ENCODE measurements at regions of chr17 and their contacts with region 1.

Region 1: DNA sequence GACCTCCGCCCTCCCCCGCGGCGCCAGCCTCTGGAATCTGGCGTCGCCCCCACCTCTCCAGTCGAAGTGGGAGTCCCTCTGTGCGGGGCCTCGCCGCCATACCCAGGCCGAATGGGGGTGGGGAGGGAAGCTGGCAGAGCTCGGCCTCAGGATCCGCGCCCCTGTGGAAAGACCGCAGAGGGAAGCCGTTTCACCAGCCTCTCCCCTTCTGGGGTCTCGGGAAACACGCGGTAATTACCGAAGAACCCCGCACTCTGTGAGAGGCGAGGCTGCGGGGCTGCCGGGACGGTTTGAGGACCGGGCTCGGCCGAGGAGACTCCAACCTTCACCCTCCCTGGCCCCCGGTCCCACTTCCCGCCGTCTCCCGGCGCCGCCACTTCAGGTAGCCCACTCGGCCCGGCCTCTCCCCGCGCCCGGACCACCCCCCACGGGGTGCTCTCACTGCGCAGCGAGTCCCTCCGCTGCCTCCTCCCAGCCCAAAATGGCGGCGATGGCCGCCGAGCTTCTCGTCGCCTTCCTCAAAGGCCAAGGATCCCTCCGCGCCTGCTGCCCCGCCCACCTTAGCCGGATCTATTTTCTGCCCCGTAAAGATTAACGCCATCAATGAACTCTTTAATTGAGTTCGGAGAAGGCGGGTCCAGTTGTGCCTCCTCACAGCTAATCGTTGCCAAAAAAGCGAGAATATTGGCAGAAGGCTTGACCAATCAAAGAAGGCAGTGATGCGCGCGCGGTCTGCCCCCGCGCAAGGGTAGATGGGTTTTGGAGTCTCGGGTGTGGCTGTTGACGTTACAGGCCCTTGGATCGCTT is 453 bp upstream of the HEXIM2 start:
- DNase-seq: peak; percentile 96
- ATAC-seq: peak; percentile 97
- H3K4me3 Mint-ChIP-seq: peak overlapping the region; percentile 99
- H3K27ac Mint-ChIP-seq: peak overlapping the region; percentile 99
- H3K4me1 Mint-ChIP-seq: peaks cover 36% of the 10 kb centered on the region
- H3K27me3 Mint-ChIP-seq: no peaks in the 10 kb centered on the region

Region 2: GRCh38 chr17:45123930-45124796 is 37.1 kb before region 1 on chr17:
- POLR2A ChIA-PET with region 1: no interaction called
- DNase-seq: no peak
- ATAC-seq: peak; percentile 9
- H3K4me3 Mint-ChIP-seq: no peak overlapping the region
- H3K27ac Mint-ChIP-seq: no peak overlapping the region
- H3K4me1 Mint-ChIP-seq: no peaks in the 10 kb centered on the region
- H3K27me3 Mint-ChIP-seq: peaks cover 9% of the 10 kb centered on the region

Region 3: DNA sequence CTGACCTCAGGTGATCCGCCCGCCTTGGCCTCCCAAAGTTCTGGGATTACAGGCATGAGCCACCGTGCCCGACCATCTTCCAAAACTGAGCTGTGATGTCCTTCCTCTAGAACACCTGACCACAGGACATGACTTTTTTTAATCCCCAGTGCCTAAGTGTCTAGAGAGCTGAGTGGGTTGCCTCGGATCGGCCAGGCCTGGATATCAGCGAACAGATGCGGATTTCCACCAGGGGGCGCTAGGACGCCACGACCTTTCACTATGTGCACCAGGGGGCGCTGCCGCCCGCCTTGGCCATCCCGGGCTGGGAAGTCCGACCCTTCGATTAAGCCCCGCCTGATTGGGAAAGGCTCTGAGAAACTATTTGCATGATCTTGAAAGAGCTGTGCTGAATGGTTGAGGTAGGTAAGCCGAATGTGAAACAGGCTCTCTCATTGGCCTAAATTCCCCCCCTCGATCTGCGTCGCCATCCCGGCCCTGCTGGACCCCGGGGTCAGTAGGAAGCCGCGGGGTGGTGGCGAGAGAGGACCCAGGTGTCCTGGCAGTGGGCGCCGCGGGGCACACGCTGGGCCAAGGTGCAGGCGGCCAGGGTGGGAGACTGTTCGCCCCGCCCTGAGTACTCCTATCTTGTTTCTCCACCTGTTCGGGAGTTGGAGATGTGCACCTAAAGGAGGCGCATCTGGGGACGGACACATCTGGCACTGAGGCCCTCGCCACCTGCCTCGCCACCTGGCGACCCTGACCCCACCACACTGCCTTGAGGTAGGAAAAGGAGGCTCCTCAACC is 25.8 kb before region 1 on chr17 and contains the start of gene ACBD4:
- POLR2A ChIA-PET with region 1: interaction called, 17 read pairs
- DNase-seq: peak; percentile 99
- ATAC-seq: peak; percentile 91
- H3K4me3 Mint-ChIP-seq: peak within 1 kb of the TSS; percentile 94
- H3K27ac Mint-ChIP-seq: peak within 1 kb of the TSS; percentile 80
- H3K4me1 Mint-ChIP-seq: peaks cover 8% of the 10 kb centered on the region
- H3K27me3 Mint-ChIP-seq: peaks cover 11% of the 10 kb centered on the region
- total RNA-seq, gene ACBD4: 24.5 to 25.0 TPM

Region 4: DNA sequence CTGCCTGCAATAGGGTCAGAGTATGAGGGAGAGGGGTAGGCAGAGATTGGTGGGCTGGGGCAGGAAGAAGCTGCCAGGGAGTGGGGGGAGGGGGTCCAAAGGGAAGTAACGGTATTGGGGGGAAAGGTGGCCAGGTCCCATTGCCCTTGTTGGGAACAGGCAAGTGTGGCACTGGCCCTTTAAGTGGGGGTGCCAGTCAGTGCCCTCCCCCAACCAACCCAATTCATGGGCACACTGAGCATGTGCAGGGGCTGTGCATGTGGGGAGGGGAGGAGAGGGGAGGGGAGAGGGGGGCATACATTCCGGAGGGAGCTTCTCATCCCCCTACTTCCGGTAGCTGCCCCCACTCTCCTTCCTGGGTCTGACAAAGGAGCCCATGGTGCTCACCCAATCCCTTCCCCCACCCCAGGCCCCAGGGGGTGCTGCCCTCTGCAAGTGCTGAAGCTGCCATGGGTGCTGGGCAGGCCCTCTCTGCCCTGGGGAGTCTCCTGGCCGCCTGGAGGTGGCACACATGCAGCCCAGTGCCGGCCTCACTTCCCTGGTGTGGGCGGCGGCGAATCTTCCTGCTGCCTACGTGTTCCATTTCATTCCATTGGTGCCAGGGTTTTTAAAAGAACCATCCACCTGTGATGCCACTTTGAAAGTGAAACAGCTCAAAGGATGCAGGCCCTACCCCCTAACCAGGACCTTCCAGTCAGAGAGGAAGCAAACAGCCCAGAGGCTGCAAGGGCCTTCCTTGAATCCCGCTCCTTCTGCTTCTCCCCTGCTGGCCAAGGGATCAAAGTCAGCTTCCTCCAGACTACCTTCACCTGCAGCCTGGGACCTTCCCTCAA is 11.4 kb after region 1 on chr17:
- POLR2A ChIA-PET with region 1: interaction called, 55 read pairs
- DNase-seq: peak; percentile 72
- ATAC-seq: peak; percentile 71
- H3K4me3 Mint-ChIP-seq: peak overlapping the region; percentile 86
- H3K27ac Mint-ChIP-seq: peak overlapping the region; percentile 96
- H3K4me1 Mint-ChIP-seq: peaks cover 7% of the 10 kb centered on the region
- H3K27me3 Mint-ChIP-seq: no peaks in the 10 kb centered on the region

Region 5: DNA sequence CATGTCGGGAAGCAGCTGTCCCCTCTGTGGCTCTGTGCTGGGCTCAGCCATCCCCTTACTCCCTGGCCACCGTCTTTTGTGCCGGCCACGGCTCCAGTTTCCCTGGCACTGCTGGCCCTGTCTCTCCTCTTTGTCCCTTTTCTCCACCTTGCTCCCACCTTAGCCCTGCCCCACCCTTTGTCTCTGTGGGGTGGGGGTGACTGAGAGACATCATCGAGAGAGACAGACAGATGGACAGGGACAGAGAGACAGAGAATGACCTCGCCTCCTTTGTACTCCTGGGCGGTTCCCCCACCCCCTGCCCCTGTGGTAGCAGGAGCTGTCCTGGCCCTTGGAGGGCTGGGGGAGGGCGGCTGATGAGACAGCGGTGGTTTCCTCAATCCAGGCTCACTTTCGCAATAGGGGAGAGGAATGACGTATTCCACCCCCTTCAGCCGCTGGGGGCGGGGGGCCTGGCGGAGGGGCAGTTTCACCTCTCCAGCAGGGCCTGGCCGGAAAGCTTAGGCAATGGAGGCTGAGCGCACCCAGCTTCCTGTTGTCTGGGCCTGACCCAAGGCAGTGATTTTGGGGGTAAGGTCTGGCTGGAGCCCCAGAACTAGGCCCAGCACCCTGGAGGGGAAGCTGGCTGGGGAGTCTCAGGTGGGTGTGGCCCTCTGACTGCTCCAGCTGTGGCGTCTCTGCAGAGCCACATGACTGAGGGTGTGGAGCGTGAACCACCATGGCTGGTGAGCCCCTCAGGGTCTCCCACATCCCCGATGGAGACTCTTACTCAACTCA is 67.7 kb after region 1 on chr17:
- POLR2A ChIA-PET with region 1: interaction called, 11 read pairs
- DNase-seq: peak; percentile 76
- ATAC-seq: peak; percentile 33
- H3K4me3 Mint-ChIP-seq: peak overlapping the region; percentile 100
- H3K27ac Mint-ChIP-seq: peak overlapping the region; percentile 99
- H3K4me1 Mint-ChIP-seq: peaks cover 69% of the 10 kb centered on the region
- H3K27me3 Mint-ChIP-seq: no peaks in the 10 kb centered on the region